Sciatic nerve (tissue), 2 donors: ENCODE measurements at regions of chr4 and their contacts with region 1.

Region 1: DNA sequence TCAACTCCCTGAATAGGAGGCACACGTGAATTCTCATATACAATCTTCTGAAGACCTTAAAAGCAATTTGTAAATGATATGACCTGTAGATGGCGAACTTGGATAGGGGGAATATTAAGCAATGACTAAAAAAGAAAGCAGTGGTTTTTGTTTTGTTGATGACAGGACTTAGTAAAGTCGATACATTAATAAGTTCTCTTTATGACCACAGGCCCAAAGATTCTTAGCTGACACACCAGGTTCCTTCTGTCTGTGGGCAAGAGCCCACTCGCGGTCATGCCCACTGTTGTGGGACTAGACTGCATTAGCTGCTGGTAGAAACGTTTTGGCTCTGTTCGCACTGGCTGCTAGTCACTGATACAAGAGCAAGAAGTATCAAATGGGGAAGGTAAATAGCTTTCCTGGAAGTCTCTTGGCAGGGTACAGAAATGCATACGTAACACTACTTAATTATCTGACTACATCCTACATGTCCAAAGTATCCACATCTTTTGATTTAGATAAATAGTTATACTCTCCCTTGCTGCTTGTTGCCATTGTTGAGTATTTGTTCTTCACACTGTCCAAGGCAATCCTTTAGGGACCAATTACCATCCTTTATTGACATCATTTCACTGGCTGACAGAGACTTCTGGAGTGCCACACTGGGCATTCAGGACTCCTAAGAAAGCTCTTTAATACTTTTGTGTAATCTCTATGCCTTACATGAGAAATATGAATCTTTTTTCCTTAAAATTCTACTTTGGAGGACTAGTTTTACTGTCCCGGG is 31.0 kb downstream of the ALPK1 start:
- DNase-seq: no peak
- ATAC-seq: no peak

Region 2: DNA sequence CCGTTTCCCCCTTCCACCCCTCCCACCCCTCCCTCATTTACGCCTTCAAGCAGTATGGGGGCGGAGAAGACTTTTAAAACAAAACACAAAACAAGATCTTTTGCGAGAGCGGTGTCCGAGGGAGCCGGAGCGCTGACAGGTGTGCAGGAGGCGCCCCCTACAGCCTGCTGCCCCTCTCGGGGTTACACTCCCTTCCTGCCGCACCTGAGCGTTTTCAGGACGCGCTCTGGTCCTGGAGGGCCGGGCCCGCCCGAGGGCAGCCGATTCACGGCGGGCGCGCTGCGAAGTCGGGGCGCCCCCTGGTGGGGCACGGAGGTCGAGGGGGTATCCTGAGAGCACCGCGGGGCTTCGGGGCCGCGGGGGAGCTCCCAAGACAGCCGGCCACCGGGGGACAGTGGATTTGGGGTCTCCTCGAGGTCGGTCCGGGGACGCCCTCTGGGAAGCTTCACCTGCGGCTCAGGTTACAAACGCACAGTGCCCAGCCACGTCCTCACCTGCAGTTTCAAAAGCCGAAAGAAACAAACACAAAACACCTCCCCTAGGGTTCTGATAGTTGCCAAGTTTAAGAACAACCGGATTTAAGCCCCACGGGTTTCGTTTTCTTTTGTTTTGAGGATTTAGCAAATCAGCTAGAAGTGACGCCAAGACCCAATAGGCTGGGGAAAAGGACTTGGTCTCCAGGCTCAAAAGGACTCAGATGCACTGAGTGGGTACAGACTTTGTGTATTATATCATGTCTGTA is 195.8 kb after region 1 on chr4:
- intact Hi-C with region 1: loop called (anchors 5 kb)
- DNase-seq: peak; percentile 77
- ATAC-seq: peak; percentile 77